Heart left ventricle (tissue), 16 donors: ENCODE measurements at regions of chr1 and their contacts with region 1.

Region 1: DNA sequence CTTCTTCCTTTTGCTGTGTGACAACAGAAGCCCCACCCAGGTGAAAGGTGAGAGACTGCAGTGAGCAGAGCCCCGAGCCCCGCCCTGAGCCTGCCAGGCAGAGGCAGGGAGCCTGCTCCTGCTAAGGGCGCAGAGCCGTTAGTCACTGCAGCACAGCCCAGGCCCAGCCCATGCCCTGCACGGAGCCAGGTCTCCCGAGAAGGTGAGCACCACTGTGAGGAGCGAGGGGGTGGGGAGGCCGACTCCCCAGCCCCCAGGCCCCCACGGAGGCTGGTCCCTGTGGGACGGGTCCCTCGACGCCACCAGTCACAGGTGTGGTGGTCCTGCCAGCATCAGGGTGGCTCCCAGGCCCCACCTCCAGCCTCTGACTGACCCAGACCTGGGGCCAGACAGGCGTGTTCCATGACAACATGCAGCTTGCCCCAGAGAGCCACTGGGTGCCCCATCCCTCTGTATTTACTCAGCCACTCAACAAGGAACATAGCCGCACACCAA is 65.6 kb downstream of the MATN1 start:
- DNase-seq: peak in 1 of 5 donors; percentile 54
- ATAC-seq: no peak
- H3K4me3 ChIP-seq: no peak overlapping the region
- H3K27ac ChIP-seq: no peak overlapping the region
- H3K4me1 ChIP-seq: peaks cover 0 to 9% (median 0%) of the 10 kb centered on the region in 12 donors
- H3K27me3 ChIP-seq: peaks cover 0 to 14% (median 0%) of the 10 kb centered on the region in 9 donors
- CTCF ChIP-seq: no peak
- POLR2A ChIP-seq: no peak

Region 2: GRCh38 chr1:29550119-29550898 is 1107.5 kb before region 1 on chr1:
- intact Hi-C with region 1: loop called in 5 of 10 experiments (anchors 5 kb)
- DNase-seq: peak in 1 of 5 donors; percentile 58
- ATAC-seq: no peak
- H3K4me3 ChIP-seq: no peak overlapping the region
- H3K27ac ChIP-seq: no peak overlapping the region
- H3K4me1 ChIP-seq: no peaks in the 10 kb centered on the region
- H3K27me3 ChIP-seq: peaks cover 0 to 19% (median 0%) of the 10 kb centered on the region in 9 donors
- CTCF ChIP-seq: no peak
- POLR2A ChIP-seq: no peak

Region 3: GRCh38 chr1:30911046-30911954 is 253.5 kb after region 1 on chr1:
- intact Hi-C with region 1: no loop called
- DNase-seq: peak; percentile 87 to 93 (median 88)
- ATAC-seq: peak; percentile 68 to 89 (median 78)
- H3K4me3 ChIP-seq: no peak overlapping the region
- H3K27ac ChIP-seq: peak overlapping the region in 2 of 12 donors; percentile 33 to 84
- H3K4me1 ChIP-seq: peaks cover 0 to 64% (median 17%) of the 10 kb centered on the region in 12 donors
- H3K27me3 ChIP-seq: no peaks in the 10 kb centered on the region
- CTCF ChIP-seq: peak; percentile 76 to 95 (median 88)
- POLR2A ChIP-seq: no peak